HepG2 (cell line): ENCODE measurements at regions of chr3 and their contacts with region 1.

Region 1: DNA sequence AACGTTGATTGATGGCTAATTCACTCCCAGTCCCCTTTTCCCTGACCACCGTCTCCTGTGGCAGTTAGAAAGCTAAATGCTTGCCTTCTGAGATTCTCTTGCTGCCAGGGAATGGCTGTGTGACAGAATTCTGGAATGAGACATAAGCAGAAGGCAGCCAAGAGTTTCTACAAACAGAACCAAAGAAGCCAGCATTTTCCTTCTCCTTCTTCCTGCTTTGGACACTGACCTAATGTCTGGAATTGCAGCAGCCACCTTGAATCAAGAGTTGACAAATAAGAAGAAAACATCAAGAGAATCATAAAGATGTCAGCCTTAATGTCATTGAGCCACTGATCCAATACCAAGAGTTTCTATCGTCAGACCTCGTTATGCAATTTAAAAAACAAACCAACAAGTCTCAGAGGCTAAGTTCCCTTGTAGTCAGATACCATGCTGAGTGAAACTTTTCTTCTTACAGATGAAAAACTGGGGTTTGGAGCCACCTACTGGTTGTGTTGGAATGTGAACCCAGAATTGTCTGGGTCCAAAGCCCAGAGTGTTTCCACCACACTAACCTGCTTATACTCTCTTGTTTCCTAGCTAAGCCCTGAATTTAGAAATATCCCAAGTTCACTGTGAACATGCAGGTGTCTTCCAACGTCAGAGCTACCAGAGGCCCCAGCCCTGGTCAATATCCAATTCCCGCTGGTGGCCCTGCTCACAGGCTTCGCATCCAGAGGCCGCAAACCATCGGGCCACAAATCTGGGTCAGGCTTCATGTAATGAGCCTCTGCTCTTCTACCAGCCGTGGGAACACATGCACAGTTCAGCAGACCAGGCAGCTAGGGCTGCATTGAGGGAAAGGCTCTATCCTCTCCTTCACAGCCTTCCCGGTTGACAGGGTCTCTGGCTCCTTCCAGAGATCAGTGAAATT is 42.5 kb downstream of the MCF2L2 start:
- DNase-seq: peak; percentile 47
- ATAC-seq: peak; percentile 92
- H3K4me3 ChIP-seq: no peak overlapping the region
- H3K27ac ChIP-seq: no peak overlapping the region
- H3K4me1 ChIP-seq: no peaks in the 10 kb centered on the region
- H3K27me3 ChIP-seq: no peaks in the 10 kb centered on the region
- CTCF ChIP-seq: peak; percentile 79
- EP300 ChIP-seq: no peak
- POLR2A ChIP-seq: no peak
- RAD21 ChIP-seq: peak; percentile 72

Region 2: DNA sequence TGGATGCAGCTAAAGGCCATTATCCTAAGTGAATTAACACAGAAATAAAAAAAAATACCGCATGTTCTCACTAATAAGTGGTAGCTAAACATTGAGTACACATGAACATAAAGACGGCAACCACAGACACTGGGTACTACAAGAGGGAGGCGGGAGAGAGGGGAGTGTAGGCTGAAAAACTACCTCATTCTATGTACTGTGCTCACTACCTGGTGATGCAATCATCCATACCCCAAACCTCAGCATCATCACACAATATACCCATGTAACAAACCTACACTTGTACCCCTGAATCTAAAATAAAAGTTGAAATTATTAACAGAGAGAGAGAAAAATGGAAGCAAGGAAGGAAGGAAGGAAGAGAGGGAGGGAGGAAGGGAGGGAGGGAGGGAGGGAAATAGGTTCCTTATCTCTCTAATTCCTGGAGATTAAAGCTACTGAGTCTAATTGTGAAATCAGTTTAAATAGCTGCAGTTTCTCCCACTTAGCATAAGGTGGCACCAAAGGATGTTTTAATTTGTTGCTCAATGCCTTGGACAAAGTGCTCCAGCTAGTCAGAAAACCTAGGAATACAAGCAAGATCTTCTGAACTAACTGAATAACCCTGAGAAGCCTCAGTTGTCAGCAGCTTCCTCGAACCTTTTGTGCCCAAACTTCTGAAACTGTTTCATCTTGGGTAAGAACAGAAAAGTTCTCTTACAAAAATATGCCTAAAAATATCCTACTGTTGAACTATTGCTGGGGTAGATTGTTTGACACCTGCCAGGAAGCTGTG is 672.0 kb before region 1 on chr3:
- CTCF ChIA-PET with region 1: no interaction called
- POLR2A ChIA-PET with region 1: no interaction called
- in situ Hi-C with region 1: no loop called
- intact Hi-C with region 1: loop called (anchors 10 kb)
- DNase-seq: peak; percentile 58
- ATAC-seq: peak; percentile 68
- H3K4me3 ChIP-seq: no peak overlapping the region
- H3K27ac ChIP-seq: no peak overlapping the region
- H3K4me1 ChIP-seq: peaks cover 35% of the 10 kb centered on the region
- H3K27me3 ChIP-seq: no peaks in the 10 kb centered on the region
- CTCF ChIP-seq: peak; percentile 75
- EP300 ChIP-seq: no peak
- POLR2A ChIP-seq: no peak
- RAD21 ChIP-seq: 0 out of 2 replicates have a peak, but pooled peaks have one; percentile 48

Region 3: GRCh38 chr3:183122257-183122932 is 263.6 kb before region 1 on chr3:
- CTCF ChIA-PET with region 1: interaction called, 34 read pairs
- POLR2A ChIA-PET with region 1: no interaction called
- in situ Hi-C with region 1: loop called (anchors 5 kb)
- intact Hi-C with region 1: loop called (anchors 1 kb)
- DNase-seq: peak; percentile 18
- ATAC-seq: 0 out of 3 replicates have a peak, but pooled peaks have one; percentile 35
- H3K4me3 ChIP-seq: no peak overlapping the region
- H3K27ac ChIP-seq: no peak overlapping the region
- H3K4me1 ChIP-seq: no peaks in the 10 kb centered on the region
- H3K27me3 ChIP-seq: peaks cover 0 to 3% of the 10 kb centered on the region in 2 experiments; a peak in 2 of 5 replicates
- CTCF ChIP-seq: peak; percentile 71
- EP300 ChIP-seq: no peak
- POLR2A ChIP-seq: no peak
- RAD21 ChIP-seq: peak; percentile 52

Region 4: DNA sequence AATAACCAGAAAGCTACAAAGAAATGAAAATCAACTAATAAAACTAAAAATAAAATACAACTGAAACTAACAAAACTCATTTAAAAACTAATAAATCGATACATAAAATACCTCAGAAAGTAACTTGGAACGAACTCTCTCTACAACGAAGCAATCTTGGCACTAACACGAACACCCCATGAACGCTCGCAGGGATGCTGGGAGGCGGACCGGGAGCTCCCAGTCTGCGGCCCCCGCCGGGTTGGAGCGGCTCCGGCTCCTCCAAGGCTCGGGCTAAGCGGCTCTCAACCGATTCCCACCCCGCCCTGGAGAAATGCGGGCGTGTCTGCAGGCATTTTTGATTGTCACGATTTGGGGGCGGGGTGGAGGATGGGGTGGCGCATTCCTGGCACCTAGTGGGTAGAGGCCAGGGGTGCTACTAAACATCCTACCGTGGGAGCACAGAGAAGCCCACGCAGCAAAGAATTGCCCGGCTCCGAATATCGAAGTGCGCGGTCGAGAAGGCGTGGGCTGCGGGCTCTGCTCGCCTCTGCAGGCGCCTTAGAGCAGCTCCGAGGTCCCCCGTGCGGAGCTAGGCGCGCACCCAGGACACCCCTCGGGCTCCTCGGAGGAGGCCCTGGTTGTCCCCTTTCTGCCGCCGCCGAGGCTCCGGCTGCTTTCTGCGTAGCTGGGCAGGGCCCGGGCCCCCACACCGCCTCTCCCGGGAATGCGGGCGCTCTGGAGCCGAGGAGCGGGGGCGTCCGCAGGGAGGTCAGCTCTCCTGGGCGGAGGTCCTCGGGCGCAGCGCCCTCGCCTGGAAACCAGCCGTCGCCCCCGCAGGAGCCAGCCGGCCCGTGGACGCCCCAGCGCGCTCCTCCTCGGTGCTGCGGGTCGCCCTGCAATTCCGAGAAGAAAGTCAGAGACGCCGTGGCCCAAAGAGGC is 207.1 kb before region 1 on chr3:
- CTCF ChIA-PET with region 1: interaction called, 28 read pairs
- POLR2A ChIA-PET with region 1: no interaction called
- in situ Hi-C with region 1: loop called (anchors 5 kb)
- intact Hi-C with region 1: loop called (anchors 1 kb)
- DNase-seq: no peak
- ATAC-seq: peak; percentile 86
- H3K4me3 ChIP-seq: peak overlapping the region in 2 of 3 experiments; percentile 21 to 57; a peak in 3 of 6 replicates
- H3K27ac ChIP-seq: no peak overlapping the region
- H3K4me1 ChIP-seq: no peaks in the 10 kb centered on the region; the same call in 1 of the 2 replicates
- H3K27me3 ChIP-seq: peaks cover 8 to 34% of the 10 kb centered on the region in 2 experiments
- CTCF ChIP-seq: peak; percentile 58
- EP300 ChIP-seq: no peak
- POLR2A ChIP-seq: no peak
- RAD21 ChIP-seq: 0 out of 2 replicates have a peak, but pooled peaks have one; percentile 30

Region 5: DNA sequence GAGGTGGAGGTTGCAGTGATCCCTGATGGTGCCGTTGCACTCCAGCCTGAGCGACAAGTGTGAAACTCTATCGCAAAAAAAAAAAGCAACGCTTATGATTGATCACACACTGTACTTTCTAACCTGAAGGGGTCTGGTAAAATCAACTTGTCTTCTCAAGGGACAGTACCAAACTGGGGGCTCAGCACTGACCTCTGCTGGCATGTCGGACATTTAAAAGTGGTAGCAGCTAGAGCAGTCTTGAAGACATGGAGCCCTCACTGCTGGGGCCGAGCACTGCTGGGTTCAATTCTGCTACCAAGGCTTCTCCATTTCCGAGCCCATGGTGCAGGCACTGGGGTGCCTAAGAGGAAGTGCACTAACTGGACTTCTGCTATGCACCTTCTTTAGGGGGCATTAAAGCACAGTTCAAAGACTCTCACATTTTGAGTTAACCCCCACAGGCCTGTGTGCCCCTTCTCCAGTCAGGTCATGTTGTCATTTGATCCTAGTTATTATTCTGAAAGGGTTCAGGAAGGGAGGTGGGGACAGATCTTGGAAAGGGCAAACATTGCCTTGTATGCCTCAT is 197.0 kb before region 1 on chr3:
- CTCF ChIA-PET with region 1: interaction called, 28 read pairs
- POLR2A ChIA-PET with region 1: no interaction called
- in situ Hi-C with region 1: loop called (anchors 5 kb)
- intact Hi-C with region 1: loop called (anchors 1 kb)
- DNase-seq: peak; percentile 10
- ATAC-seq: peak; percentile 88
- H3K4me3 ChIP-seq: no peak overlapping the region
- H3K27ac ChIP-seq: no peak overlapping the region
- H3K4me1 ChIP-seq: no peaks in the 10 kb centered on the region
- H3K27me3 ChIP-seq: peaks cover 0 to 14% of the 10 kb centered on the region in 2 experiments; a peak in 3 of 5 replicates
- CTCF ChIP-seq: peak; percentile 55
- EP300 ChIP-seq: no peak
- POLR2A ChIP-seq: no peak
- RAD21 ChIP-seq: no peak

Region 6: DNA sequence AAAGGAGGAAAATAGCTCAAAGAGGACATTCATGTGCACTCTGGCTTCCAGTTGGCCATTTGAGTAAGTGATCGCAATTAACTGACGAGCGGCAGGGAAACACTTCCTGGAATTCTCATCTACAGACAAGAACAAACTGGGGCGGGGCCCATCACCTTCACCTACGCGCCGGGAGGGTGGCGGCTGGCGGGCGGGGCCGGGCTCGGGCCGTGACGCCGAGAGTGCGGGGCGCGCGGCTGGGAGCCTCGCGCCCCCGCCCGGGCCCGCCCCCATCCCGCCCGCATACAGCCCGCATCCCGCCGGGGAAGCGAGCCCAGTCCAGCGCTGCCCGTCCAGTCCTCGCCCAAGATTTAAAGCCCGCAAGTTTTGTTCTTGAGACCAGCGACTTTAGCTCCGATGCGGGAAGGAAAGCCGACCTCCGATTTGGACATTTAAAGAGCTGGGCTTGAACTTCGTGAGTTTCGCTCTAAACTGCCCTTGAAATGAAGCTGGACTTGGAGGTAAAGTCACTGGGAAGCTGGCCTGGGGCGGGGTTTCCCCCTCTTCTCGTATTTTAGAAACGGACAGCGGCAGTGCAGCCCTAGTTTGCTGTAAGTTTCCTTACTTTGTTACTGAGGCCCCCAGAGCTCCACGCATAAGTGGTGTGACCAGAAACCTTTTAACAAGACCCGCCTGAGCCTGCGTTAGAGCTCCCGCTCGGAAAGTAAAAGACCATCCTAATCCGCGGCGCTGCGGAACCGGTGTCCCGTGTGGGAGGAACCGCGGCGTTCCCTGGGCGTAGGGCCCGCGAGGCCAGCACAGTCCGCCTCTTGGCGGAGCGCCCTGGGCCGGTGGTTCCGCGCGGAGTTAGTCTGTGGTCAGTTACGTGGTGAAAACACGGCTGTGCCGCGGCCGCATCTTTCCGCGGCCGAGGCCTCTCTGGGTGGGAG is 132.7 kb before region 1 on chr3 and contains the start of gene B3GNT5:
- CTCF ChIA-PET with region 1: no interaction called
- POLR2A ChIA-PET with region 1: no interaction called
- in situ Hi-C with region 1: no loop called
- intact Hi-C with region 1: loop called (anchors 5 kb)
- DNase-seq: no peak
- ATAC-seq: peak; percentile 70
- H3K4me3 ChIP-seq: peak within 1 kb of the TSS; percentile 23 to 65 (median 49)
- H3K27ac ChIP-seq: no peak within 1 kb of the TSS
- H3K4me1 ChIP-seq: peaks cover 12% of the 10 kb centered on the region
- H3K27me3 ChIP-seq: peaks cover 6 to 67% of the 10 kb centered on the region in 2 experiments; a peak in 3 of 5 replicates
- CTCF ChIP-seq: no peak
- EP300 ChIP-seq: no peak
- POLR2A ChIP-seq: no peak
- RAD21 ChIP-seq: no peak
- total RNA-seq, gene B3GNT5: not detected in 2 replicates

Region 7: DNA sequence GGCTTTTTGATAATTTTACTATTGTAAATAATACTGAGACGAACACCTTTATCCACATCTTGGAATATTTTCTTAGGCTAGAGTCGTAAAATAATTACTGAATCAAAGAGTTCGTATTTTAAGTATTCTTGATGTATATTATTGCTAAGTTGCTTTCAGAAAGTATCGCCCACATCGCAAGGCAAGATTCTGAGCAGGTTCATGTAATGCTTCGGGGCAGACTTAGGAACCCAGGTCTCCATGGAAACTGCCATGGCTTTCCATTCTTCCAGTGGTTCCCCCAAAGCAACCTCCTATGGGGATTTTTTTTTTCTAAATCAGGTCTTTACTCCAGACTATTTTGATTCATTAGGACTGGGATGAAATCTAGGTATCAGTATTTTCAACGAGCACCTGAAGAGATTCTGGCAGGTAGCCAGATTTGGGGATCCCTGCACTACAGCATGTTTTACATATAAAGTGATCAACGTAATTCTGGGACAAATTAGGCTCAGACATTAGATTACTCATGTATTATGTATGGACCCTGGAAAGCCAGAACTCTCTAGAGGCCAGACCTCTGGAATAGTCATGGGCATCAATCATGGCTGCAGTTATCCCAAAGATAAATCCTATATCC is 46.4 kb before region 1 on chr3:
- CTCF ChIA-PET with region 1: no interaction called
- POLR2A ChIA-PET with region 1: no interaction called
- in situ Hi-C with region 1: no loop called
- intact Hi-C with region 1: no loop called
- DNase-seq: no peak
- ATAC-seq: no peak
- H3K4me3 ChIP-seq: no peak overlapping the region
- H3K27ac ChIP-seq: no peak overlapping the region
- H3K4me1 ChIP-seq: no peaks in the 10 kb centered on the region
- H3K27me3 ChIP-seq: peaks cover 0 to 3% of the 10 kb centered on the region in 2 experiments; a peak in 1 of 5 replicates
- CTCF ChIP-seq: no peak
- EP300 ChIP-seq: no peak
- POLR2A ChIP-seq: no peak
- RAD21 ChIP-seq: no peak

Region 8: DNA sequence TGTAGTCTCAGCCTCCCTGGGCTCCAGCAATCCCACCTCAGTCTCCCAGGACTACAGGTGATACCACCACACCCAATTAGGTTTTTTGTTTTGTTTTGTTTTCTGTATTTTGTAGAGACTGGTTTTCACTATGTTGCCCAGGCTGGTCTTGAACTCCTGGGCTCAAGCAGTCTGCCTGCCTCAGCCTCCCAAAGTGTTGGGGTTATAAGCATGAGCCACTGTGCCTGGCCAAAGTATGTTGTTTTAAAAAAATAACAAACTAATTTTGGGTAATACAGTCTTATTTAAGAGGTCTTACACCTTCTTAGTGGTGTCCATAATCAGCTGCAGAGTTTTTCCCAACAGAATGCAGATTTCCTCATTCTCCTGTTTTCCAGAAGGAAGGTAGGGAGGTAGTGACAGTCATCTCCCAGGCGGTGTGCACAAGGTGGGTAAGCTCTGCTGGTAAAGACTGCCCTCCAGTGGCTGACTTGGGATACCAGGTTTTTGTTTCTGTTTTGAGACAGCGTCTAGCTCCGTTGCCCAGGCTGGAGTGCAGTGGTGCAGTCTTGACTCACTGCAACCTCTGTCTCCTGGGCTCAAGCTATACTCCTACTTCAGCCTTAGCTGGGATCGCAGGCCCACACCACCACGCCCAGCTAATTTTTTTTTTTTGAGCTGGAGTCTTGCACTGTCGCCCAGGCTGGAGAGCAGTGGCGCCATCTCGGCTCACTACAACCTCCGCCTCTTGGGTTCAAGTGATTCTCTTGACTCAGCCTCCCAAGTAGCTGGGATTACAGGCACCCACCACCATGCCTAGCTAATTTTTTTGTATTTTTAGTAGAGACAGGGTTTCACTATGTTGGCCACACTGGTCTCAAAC is 381.0 kb after region 1 on chr3:
- CTCF ChIA-PET with region 1: no interaction called
- POLR2A ChIA-PET with region 1: no interaction called
- in situ Hi-C with region 1: no loop called
- intact Hi-C with region 1: loop called (anchors 5 kb)
- DNase-seq: peak; percentile 67
- ATAC-seq: peak; percentile 98
- H3K4me3 ChIP-seq: no peak overlapping the region
- H3K27ac ChIP-seq: no peak overlapping the region
- H3K4me1 ChIP-seq: no peaks in the 10 kb centered on the region
- H3K27me3 ChIP-seq: no peaks in the 10 kb centered on the region
- CTCF ChIP-seq: peak; percentile 90
- EP300 ChIP-seq: no peak
- POLR2A ChIP-seq: no peak
- RAD21 ChIP-seq: peak; percentile 88